Adrenal gland (tissue), 19 donors: ENCODE measurements at regions of chr1 and their contacts with region 1.

Region 1: DNA sequence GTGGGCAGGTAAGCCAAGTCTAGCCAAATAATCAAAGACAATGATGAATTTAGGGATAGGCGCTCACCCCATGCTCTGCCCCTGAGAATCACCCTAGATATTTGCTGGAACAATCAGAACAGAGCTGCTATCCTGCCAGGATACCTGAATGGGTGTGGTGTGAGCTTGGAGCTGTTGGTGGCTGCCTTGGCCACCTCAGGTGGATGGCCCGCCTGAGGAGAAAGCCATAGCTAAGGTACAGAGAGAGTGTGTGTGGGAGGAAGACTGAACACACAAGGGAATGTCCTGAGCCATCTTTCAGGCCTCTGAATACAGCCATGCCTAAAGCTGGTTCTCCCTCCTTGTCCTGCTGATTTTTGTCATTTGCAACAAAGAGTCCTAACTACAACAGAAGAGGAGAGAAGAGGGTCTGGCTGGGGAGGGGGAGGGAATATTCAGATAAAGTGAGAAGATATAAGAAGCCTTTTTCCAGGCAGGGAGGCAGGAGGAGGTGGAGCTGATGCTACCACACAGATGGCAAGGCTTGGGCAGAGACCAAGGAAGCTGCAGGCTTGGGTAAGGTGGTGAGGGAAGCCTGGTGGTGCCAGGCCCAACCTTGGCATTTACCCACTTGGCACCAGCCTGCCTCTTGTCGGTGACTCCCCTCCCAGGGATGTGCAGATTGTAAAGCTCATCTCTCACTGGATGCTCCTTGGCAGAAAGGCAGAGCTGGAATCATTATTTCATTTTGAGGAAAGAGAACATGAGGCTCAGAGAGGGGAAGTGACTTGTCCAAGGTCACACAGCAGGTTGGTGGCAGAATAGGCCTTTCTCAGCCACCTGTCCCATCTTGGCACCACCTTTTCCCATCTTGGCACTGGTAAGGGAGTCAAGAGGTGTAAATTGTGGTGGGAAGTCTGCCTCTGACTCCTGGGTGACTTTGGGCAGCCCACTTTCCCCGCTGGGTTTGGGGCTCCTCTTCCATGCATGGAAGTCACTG is 49.7 kb downstream of the NKAIN1 start:
- DNase-seq: no peak
- H3K4me3 ChIP-seq: no peak overlapping the region
- H3K27ac ChIP-seq: no peak overlapping the region
- H3K4me1 ChIP-seq: no peaks in the 10 kb centered on the region
- H3K27me3 ChIP-seq: no peaks in the 10 kb centered on the region
- CTCF ChIP-seq: no peak
- POLR2A ChIP-seq: no peak

Region 2: GRCh38 chr1:31127266-31127665 is 62.7 kb before region 1 on chr1:
- intact Hi-C with region 1: no loop called
- DNase-seq: no peak
- H3K4me3 ChIP-seq: no peak overlapping the region
- H3K27ac ChIP-seq: no peak overlapping the region
- H3K4me1 ChIP-seq: no peaks in the 10 kb centered on the region
- H3K27me3 ChIP-seq: no peaks in the 10 kb centered on the region
- CTCF ChIP-seq: no peak
- POLR2A ChIP-seq: no peak

Region 3: DNA sequence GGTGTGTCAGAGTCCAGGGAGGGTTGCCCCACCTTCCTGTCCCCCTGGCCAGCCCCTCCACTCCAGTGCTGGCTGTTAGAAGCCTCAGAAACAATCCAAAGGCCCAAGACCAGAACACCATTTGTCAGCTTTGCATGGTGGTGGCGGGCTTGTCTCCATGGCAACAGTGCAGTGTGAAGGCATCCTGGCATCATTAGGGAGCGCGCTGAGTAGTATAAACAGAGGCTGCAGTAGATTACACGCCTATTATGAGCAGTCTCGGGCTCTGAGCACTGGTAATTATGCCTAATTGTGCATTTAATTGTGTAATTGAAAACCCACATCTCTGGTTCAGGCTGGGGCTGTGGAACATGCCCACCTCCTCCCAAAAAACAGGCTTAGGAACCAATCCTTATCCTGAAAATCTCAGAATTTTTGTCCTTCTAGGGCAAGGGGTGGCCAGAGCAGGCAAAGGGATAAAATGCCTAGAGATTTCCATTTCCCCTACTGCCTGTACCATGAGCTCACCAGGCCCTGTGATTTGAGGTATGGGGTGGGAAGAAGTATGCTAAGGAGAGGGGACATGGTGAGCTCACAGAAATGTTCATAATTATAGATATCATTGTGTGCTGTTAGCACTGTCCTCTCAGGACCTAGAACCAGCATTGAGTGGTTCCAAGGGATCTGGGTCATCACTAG is 38.0 kb after region 1 on chr1:
- intact Hi-C with region 1: no loop called
- DNase-seq: no peak
- H3K4me3 ChIP-seq: no peak overlapping the region
- H3K27ac ChIP-seq: no peak overlapping the region
- H3K4me1 ChIP-seq: no peaks in the 10 kb centered on the region
- H3K27me3 ChIP-seq: no peaks in the 10 kb centered on the region
- CTCF ChIP-seq: no peak
- POLR2A ChIP-seq: no peak

Region 4: DNA sequence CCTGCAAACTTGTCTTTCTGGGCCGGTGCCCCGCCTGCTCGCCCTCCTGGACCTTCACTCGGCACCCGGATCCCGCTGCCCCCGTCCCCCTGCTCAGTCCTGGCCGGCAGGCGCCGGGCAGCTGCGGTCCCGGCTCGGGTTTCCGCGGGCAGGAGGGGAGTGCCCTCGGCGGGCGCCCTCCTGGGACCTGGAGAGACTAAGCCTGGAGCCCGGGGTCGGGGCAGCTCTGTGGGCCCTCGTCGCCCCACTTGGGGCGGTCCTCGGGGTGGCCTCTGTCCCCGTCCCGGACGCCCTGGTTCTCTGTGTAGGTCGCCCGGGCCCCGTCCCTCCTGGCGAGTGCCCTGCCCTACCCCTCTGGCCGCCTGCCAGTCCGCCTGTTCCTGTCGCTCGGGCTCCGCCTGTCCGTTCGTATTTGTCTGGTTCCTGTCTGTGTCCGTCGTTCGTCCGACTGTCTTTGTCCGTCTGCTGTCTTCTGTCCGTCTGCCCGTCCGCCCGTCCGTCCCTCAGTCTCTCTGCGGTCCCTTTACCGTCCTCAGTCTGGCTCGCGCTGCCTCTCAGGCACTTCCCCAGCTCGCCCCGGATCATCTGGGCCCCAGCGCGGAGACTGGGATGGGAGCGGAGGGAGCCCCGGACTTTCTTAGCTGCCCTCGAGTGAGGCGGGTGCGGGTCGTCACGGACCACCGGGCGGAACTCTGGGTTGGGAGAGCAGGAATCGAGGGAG is 223.6 kb after region 1 on chr1:
- intact Hi-C with region 1: loop called in 1 of 2 experiments (anchors 5 kb)
- DNase-seq: peak; percentile 70 to 87 (median 82)
- H3K4me3 ChIP-seq: peak overlapping the region; percentile 38 to 86 (median 59)
- H3K27ac ChIP-seq: peak overlapping the region in 3 of 5 donors; percentile 20 to 69 (median 26)
- H3K4me1 ChIP-seq: peaks cover 5 to 14% of the 10 kb centered on the region in 2 donors
- H3K27me3 ChIP-seq: peaks cover 3% of the 10 kb centered on the region
- CTCF ChIP-seq: no peak
- POLR2A ChIP-seq: no peak

Region 5: GRCh38 chr1:31487143-31487542 is 297.2 kb after region 1 on chr1:
- intact Hi-C with region 1: no loop called
- DNase-seq: no peak
- H3K4me3 ChIP-seq: no peak overlapping the region
- H3K27ac ChIP-seq: no peak overlapping the region
- H3K4me1 ChIP-seq: no peaks in the 10 kb centered on the region
- H3K27me3 ChIP-seq: no peaks in the 10 kb centered on the region
- CTCF ChIP-seq: no peak
- POLR2A ChIP-seq: no peak